Right cardiac atrium (tissue), 5 donors: ENCODE measurements at regions of chr22 and their contacts with region 1.

Region 1: DNA sequence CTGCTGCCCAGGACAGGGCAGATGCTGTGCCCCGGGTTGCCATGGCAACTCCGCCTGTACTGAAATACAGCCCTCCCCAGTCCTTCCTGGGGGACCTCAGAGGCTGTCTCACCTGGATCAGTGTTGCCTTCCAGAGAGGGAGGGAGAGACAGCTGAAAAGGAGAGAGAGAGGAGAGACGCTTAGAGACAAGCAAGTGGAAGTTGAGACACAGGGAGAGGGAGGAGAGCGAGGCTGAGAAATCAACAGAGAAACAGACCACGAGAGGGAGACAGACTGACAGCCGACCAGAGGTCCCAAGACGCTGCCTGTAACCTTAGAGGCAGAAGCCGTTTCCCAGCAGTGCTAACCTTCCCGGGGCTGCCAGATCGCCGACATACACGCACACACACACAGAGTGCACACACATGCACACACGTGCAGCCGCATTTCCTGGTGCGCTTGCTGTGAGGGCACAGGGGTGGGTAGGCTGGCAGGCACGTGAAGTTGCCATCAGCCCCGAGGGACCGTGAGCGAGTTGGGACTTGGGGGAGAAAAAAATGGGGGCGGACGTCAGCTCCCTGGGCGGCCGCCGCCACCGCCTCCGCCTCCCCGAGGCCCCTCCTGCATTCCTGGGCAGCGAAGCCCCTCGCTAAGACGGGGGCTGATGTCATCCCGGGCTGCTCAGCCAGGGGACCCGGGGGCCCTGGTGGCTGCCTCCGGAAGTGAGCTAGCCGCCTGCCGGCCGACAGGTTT is 88.6 kb upstream of the CRYBB3 start:
- DNase-seq: peak; percentile 62 to 83 (median 81)
- ATAC-seq: peak; percentile 88
- H3K4me3 ChIP-seq: peak overlapping the region; percentile 59
- H3K27ac ChIP-seq: peak overlapping the region; percentile 55
- H3K4me1 ChIP-seq: peaks cover 7% of the 10 kb centered on the region
- H3K27me3 ChIP-seq: no peaks in the 10 kb centered on the region

Region 2: GRCh38 chr22:25148149-25148691 is 37.2 kb after region 1 on chr22:
- intact Hi-C with region 1: loop called in 1 of 4 experiments (anchors 5 kb)
- DNase-seq: peak in 1 of 3 donors; percentile 34
- ATAC-seq: peak; percentile 78 to 80
- H3K4me3 ChIP-seq: no peak overlapping the region
- H3K27ac ChIP-seq: peak overlapping the region; percentile 61
- H3K4me1 ChIP-seq: peaks cover 6% of the 10 kb centered on the region
- H3K27me3 ChIP-seq: no peaks in the 10 kb centered on the region